ENCODE measurements at regions of chr4 and their contacts with region 1.

Region 1: GRCh38 chr4:25400699-25401399 is 23.8 kb downstream of the ANAPC4 start:
- DNase-seq: peak in 1 of 2 experiments; percentile 9
- H3K4me3 ChIP-seq: no peak overlapping the region
- H3K4me3 Mint-ChIP-seq: no peak overlapping the region
- H3K27ac Mint-ChIP-seq: no peak overlapping the region
- H3K4me1 ChIP-seq: peaks cover 8% of the 10 kb centered on the region
- H3K4me1 Mint-ChIP-seq: peaks cover 22% of the 10 kb centered on the region
- H3K27me3 ChIP-seq: no peaks in the 10 kb centered on the region
- H3K27me3 Mint-ChIP-seq: no peaks in the 10 kb centered on the region
- CTCF ChIP-seq: no peak

Region 2: GRCh38 chr4:23889814-23890341 is 1511.0 kb before region 1 on chr4 and contains the start of gene PPARGC1A:
- CTCF ChIA-PET with region 1: interaction called, 10 read pairs
- POLR2A ChIA-PET with region 1: no interaction called
- intact Hi-C with region 1: no loop called
- DNase-seq: peak; percentile 10 to 43
- H3K4me3 ChIP-seq: no peak within 1 kb of the TSS
- H3K4me3 Mint-ChIP-seq: peak within 1 kb of the TSS; percentile 53
- H3K27ac Mint-ChIP-seq: no peak within 1 kb of the TSS
- H3K4me1 ChIP-seq: no peaks in the 10 kb centered on the region
- H3K4me1 Mint-ChIP-seq: peaks cover 10% of the 10 kb centered on the region
- H3K27me3 ChIP-seq: no peaks in the 10 kb centered on the region
- H3K27me3 Mint-ChIP-seq: peaks cover 21% of the 10 kb centered on the region
- CTCF ChIP-seq: no peak
- total RNA-seq, gene PPARGC1A: 0.09 TPM in 1 of 2 replicates, not detected in the other

Region 3: DNA sequence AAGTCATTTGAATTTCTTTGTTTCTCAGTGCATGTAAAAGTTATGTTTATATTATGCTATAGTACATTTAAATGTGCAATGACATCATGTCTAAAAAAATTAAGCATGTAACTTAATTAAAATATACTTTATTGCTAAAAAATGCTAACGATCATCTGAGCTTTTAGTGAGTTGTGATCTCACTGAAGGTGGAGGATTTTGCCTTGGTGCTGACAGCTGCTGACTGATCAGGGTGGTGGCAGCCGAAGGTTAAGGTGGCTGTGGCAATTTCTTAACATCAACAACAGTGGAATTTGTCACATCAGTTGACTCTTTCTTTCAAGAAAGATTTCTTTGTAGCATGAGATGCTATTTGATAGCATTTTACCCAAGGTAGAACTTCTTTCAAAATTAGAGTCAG is 17.2 kb before region 1 on chr4:
- CTCF ChIA-PET with region 1: no interaction called
- POLR2A ChIA-PET with region 1: no interaction called
- intact Hi-C with region 1: no loop called
- DNase-seq: no peak
- H3K4me3 ChIP-seq: no peak overlapping the region
- H3K4me3 Mint-ChIP-seq: no peak overlapping the region
- H3K27ac Mint-ChIP-seq: no peak overlapping the region
- H3K4me1 ChIP-seq: peaks cover 3% of the 10 kb centered on the region; the same call in 1 of the 2 replicates
- H3K4me1 Mint-ChIP-seq: no peaks in the 10 kb centered on the region
- H3K27me3 ChIP-seq: no peaks in the 10 kb centered on the region
- H3K27me3 Mint-ChIP-seq: no peaks in the 10 kb centered on the region
- CTCF ChIP-seq: no peak

Measured in Caco-2 (cell line).